GM12878 (cell line): ENCODE measurements at regions of chr9 and their contacts with region 1.

Region 1: DNA sequence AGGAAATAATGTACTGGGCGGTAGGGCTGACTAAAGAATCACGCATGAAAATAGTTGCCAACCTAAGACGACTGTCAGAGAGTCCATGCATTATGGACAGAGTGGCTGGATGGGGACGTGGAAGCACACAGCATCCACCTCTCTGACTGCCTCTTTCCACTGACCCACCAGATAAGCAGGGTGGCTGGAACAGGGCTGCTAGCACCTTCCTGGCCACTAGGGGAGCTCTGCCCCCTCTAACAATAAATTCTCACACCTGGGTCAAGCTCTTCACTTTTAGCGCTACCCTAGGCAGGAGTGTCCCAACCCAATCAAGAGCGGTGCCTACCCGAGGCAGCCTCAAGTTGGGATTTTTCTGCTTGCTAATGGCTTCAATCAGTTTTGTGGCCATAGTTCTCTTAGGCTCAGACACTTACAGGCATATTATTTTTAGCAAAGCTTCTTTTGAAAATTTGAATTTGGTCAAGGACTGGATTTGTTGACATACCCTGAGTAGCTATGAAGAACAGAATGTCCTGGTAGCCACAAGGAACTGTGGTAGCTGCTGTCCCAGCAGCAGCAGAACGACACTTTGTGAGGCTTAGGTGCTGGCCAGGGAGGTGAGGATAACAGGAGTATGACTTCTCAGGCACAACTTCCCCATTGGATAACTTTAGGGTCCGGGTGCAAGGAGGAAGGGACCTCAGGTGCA is 6.9 kb upstream of the TPM2 start:
- DNase-seq: no peak
- ATAC-seq: peak; percentile 99
- H3K4me3 ChIP-seq: no peak overlapping the region
- H3K27ac ChIP-seq: no peak overlapping the region
- H3K4me1 ChIP-seq: no peaks in the 10 kb centered on the region
- H3K27me3 ChIP-seq: no peaks in the 10 kb centered on the region
- CTCF ChIP-seq: peak; percentile 78 to 98 (median 97)
- EP300 ChIP-seq: no peak
- POLR2A ChIP-seq: no peak
- RAD21 ChIP-seq: peak; percentile 61

Region 2: GRCh38 chr9:35540315-35540714 is 156.4 kb before region 1 on chr9:
- CTCF ChIA-PET with region 1: no interaction called
- POLR2A ChIA-PET with region 1: no interaction called
- RAD21 ChIA-PET with region 1: no interaction called
- SMC1A ChIA-PET with region 1: no interaction called
- in situ Hi-C with region 1: no loop called
- intact Hi-C with region 1: no loop called
- DNase-seq: no peak
- ATAC-seq: no peak
- H3K4me3 ChIP-seq: no peak overlapping the region
- H3K27ac ChIP-seq: no peak overlapping the region
- H3K4me1 ChIP-seq: no peaks in the 10 kb centered on the region
- H3K27me3 ChIP-seq: peaks cover 0 to 2% of the 10 kb centered on the region in 2 experiments; a peak in 2 of 4 replicates
- CTCF ChIP-seq: no peak
- EP300 ChIP-seq: no peak
- POLR2A ChIP-seq: no peak
- RAD21 ChIP-seq: no peak

Region 3: GRCh38 chr9:35611230-35611797 is 85.4 kb before region 1 on chr9:
- CTCF ChIA-PET with region 1: interaction called, 40 read pairs
- POLR2A ChIA-PET with region 1: no interaction called
- RAD21 ChIA-PET with region 1: interaction called, 4 read pairs
- SMC1A ChIA-PET with region 1: interaction called, 4 read pairs
- in situ Hi-C with region 1: no loop called
- intact Hi-C with region 1: no loop called
- DNase-seq: no peak
- ATAC-seq: peak; percentile 93
- H3K4me3 ChIP-seq: no peak overlapping the region
- H3K27ac ChIP-seq: no peak overlapping the region
- H3K4me1 ChIP-seq: peaks cover under 1% of the 10 kb centered on the region; the same call in 1 of the 2 replicates
- H3K27me3 ChIP-seq: no peaks in the 10 kb centered on the region
- CTCF ChIP-seq: peak; percentile 73 to 80 (median 77)
- EP300 ChIP-seq: no peak
- POLR2A ChIP-seq: no peak
- RAD21 ChIP-seq: peak; percentile 39

Region 4: DNA sequence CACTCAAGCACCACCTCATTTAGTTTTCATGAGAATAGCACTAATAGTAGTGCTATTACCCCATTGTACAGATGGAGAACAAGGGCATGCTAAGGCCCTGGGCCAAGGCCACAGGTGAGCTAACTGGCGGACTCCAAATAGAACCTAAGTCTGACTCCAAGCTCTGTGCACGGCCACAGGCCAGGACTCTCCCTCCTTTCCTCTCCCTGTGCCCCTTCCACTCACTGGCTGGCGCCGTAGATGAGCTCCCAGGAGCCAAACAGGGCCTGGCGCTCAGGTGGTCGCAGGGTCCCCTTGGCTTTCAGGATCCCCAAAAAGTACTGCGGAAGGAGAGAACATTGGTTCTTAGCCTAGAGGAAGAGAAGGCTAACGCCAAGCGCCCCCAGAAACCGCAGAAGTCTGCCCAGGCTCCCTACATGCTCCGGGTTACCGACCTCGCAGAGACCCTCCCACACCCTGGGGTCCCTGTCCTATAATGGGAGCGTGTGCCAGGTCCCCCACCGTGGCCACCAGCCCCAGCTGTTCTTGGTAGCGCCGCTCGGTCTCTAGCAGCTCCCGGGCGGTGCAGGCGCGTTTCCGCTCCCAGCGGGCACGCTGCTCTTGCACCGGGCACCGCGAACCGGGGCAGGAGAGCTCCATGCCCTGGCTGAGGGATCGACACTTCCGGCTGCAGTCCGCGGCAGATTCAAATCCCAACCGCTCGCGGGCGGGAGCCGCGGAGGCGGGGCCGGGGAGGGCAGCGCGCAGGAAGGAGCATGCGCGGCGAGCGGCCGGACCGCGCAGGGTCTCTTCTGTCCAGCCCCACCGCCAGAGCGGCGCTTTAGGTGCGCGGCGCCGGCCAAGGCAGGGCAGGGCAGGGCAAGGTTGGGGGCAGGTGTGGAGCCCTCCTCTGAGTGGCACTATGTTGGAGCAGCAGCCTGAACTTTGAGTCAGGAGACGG is 31.9 kb before region 1 on chr9 and contains the start of gene ARHGEF39:
- CTCF ChIA-PET with region 1: interaction called, 227 read pairs
- POLR2A ChIA-PET with region 1: interaction called, 6 read pairs
- RAD21 ChIA-PET with region 1: interaction called, 20 read pairs
- SMC1A ChIA-PET with region 1: interaction called, 65 read pairs
- in situ Hi-C with region 1: no loop called
- intact Hi-C with region 1: no loop called
- DNase-seq: no peak
- ATAC-seq: peak; percentile 92
- H3K4me3 ChIP-seq: peak within 1 kb of the TSS; percentile 79
- H3K27ac ChIP-seq: peak within 1 kb of the TSS; percentile 85
- H3K4me1 ChIP-seq: peaks cover 33% of the 10 kb centered on the region
- H3K27me3 ChIP-seq: no peaks in the 10 kb centered on the region
- CTCF ChIP-seq: peak; percentile 15 to 44 (median 18); a peak in 3 of 6 replicates
- EP300 ChIP-seq: no peak
- POLR2A ChIP-seq: peak; percentile 83
- RAD21 ChIP-seq: 0 out of 2 replicates have a peak, but pooled peaks have one; percentile 7
- polyA plus RNA-seq, gene ARHGEF39: 2.0 to 5.0 TPM

Region 5: GRCh38 chr9:35716230-35716629 is 19.6 kb after region 1 on chr9:
- CTCF ChIA-PET with region 1: interaction called, 41 read pairs
- POLR2A ChIA-PET with region 1: interaction called, 3 read pairs
- RAD21 ChIA-PET with region 1: interaction called, 5 read pairs
- SMC1A ChIA-PET with region 1: interaction called, 7 read pairs
- in situ Hi-C with region 1: no loop called
- intact Hi-C with region 1: no loop called
- DNase-seq: no peak
- ATAC-seq: no peak
- H3K4me3 ChIP-seq: no peak overlapping the region
- H3K27ac ChIP-seq: no peak overlapping the region
- H3K4me1 ChIP-seq: peaks cover 14% of the 10 kb centered on the region
- H3K27me3 ChIP-seq: no peaks in the 10 kb centered on the region
- CTCF ChIP-seq: no peak
- EP300 ChIP-seq: no peak
- POLR2A ChIP-seq: no peak; the same call in 1 of the 2 replicates
- RAD21 ChIP-seq: no peak

Region 6: GRCh38 chr9:35798658-35799374 is 102.1 kb after region 1 on chr9:
- CTCF ChIA-PET with region 1: no interaction called
- POLR2A ChIA-PET with region 1: no interaction called
- RAD21 ChIA-PET with region 1: no interaction called
- SMC1A ChIA-PET with region 1: no interaction called
- in situ Hi-C with region 1: no loop called
- intact Hi-C with region 1: no loop called
- DNase-seq: no peak
- ATAC-seq: peak; percentile 56
- H3K4me3 ChIP-seq: no peak overlapping the region
- H3K27ac ChIP-seq: no peak overlapping the region
- H3K4me1 ChIP-seq: peaks cover 21% of the 10 kb centered on the region
- H3K27me3 ChIP-seq: no peaks in the 10 kb centered on the region
- CTCF ChIP-seq: no peak
- EP300 ChIP-seq: no peak
- POLR2A ChIP-seq: no peak
- RAD21 ChIP-seq: no peak

Region 7: GRCh38 chr9:35814841-35815543 is 118.3 kb after region 1 on chr9 and contains the start of gene HINT2:
- CTCF ChIA-PET with region 1: interaction called, 14 read pairs
- POLR2A ChIA-PET with region 1: no interaction called
- RAD21 ChIA-PET with region 1: no interaction called
- SMC1A ChIA-PET with region 1: interaction called, 4 read pairs
- in situ Hi-C with region 1: no loop called
- intact Hi-C with region 1: no loop called
- DNase-seq: peak; percentile 95
- ATAC-seq: peak; percentile 92
- H3K4me3 ChIP-seq: peak within 1 kb of the TSS; percentile 79
- H3K27ac ChIP-seq: peak within 1 kb of the TSS; percentile 75
- H3K4me1 ChIP-seq: peaks cover 33% of the 10 kb centered on the region
- H3K27me3 ChIP-seq: no peaks in the 10 kb centered on the region; a peak in 1 of 4 replicates
- CTCF ChIP-seq: no peak
- EP300 ChIP-seq: no peak
- POLR2A ChIP-seq: peak; percentile 95
- RAD21 ChIP-seq: no peak
- polyA plus RNA-seq, gene HINT2: 12.1 to 32.0 TPM

Region 8: DNA sequence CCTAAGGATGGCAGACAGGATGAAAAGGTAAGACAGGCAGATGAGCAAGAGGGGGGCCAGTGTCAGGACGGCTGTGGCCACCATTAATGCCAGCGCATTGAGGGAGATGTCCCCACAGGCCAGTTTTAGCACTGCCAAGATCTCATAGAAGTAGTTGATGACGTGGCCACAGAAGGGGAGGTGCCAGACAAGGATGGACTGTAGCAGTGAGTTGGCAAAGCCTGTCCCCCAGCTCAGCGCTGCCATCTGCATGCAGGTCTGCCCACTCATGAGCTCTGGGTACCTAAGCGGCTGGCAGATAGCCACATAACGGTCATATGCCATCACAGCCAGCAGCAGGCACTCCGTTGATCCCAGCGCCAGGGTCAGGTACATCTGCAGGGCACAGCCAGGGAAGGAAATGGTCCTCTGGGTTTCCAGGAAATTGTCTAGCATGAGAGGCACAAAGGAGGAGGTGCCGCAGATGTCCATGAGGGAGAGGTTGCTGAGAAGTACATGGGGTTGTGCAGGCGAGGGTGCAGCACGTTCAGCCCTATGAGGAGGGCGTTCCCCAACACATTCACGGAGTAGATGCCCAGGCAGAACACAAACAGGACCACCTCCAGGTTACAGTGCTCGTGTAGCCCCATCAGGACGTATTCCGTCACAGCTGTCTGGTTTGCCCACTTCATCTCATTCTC is 162.8 kb after region 1 on chr9:
- CTCF ChIA-PET with region 1: no interaction called
- POLR2A ChIA-PET with region 1: no interaction called
- RAD21 ChIA-PET with region 1: no interaction called
- SMC1A ChIA-PET with region 1: no interaction called
- in situ Hi-C with region 1: no loop called
- intact Hi-C with region 1: no loop called
- DNase-seq: no peak
- ATAC-seq: peak; percentile 69
- H3K4me3 ChIP-seq: no peak overlapping the region
- H3K27ac ChIP-seq: no peak overlapping the region
- H3K4me1 ChIP-seq: no peaks in the 10 kb centered on the region
- H3K27me3 ChIP-seq: no peaks in the 10 kb centered on the region
- CTCF ChIP-seq: peak in 1 of 3 experiments; percentile 22; a peak in 2 of 6 replicates
- EP300 ChIP-seq: no peak
- POLR2A ChIP-seq: no peak
- RAD21 ChIP-seq: no peak